Ascending aorta (tissue), 2 donors: ENCODE measurements at regions of chr1 and their contacts with region 1.

Region 1: DNA sequence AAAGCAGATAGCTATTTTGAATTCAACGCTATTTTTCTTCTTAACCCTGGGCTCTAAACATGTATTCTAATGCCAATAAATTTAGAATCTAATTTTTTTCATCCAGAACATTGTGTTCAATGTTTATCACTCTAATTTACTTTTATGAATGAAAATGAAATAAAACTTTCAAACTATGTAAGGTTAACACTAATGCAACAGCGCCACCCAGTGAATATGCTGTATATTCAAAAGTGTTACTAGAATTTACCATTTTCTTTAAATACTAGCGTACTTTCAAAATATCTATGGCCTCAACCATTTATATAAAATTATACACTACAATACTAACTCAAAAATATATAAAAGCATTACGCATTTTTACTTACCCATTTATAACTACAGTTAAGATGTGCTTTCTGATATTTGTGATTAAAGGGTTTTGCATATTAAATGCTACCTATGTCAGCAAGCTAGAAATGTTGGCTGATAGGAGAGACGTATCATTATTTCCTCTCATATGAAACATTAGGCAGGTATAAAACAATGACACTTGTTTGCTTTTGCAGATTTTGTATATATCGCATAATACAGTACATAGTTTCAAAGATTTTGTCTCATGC is 5.9 kb upstream of the NUF2 start:
- DNase-seq: no peak
- H3K4me3 ChIP-seq: peak overlapping the region in 1 of 2 donors; percentile 41
- H3K27ac ChIP-seq: no peak overlapping the region
- H3K4me1 ChIP-seq: peaks cover 3 to 8% of the 10 kb centered on the region in 2 donors
- H3K27me3 ChIP-seq: no peaks in the 10 kb centered on the region
- CTCF ChIP-seq: peak; percentile 60 to 74 (median 60)

Region 2: DNA sequence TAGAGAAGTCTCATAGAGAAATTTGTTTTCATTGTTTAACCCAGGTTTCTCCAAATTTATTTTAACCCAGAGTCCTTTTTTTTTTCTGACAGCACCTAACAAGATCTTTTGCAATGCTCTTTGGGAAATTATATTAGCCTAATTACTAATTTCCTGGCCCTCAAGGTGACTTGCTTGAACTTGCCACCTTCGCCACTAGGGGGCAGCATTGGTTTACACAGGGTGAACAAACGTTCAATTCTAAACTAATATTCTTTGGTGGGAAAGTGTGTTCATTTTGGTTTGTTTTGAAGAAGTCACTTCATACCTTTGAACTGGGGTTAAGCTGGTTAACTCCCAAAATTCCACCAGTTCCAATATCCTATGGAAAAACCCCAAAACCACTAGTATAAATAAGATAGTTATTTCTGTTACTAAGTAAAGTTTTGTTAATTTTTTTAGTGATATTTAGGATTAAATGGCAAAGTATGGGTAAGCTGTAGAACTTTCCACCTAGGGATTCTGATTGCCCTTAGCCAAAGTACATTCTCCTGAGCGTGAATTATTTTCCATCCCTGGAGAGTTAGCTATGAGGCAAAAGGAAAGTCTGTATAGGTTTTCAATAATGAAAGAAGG is 467.9 kb before region 1 on chr1:
- intact Hi-C with region 1: loop called (anchors 2 kb)
- DNase-seq: peak in 1 of 2 donors; percentile 88
- H3K4me3 ChIP-seq: peak overlapping the region in 1 of 2 donors; percentile 31
- H3K27ac ChIP-seq: no peak overlapping the region
- H3K4me1 ChIP-seq: no peaks in the 10 kb centered on the region
- H3K27me3 ChIP-seq: no peaks in the 10 kb centered on the region
- CTCF ChIP-seq: peak; percentile 78 to 95 (median 92)

Region 3: GRCh38 chr1:162987866-162988265 is 328.0 kb before region 1 on chr1:
- intact Hi-C with region 1: loop called (anchors 10 kb)
- DNase-seq: no peak
- H3K4me3 ChIP-seq: no peak overlapping the region
- H3K27ac ChIP-seq: no peak overlapping the region
- H3K4me1 ChIP-seq: no peaks in the 10 kb centered on the region
- H3K27me3 ChIP-seq: no peaks in the 10 kb centered on the region
- CTCF ChIP-seq: no peak

Region 4: DNA sequence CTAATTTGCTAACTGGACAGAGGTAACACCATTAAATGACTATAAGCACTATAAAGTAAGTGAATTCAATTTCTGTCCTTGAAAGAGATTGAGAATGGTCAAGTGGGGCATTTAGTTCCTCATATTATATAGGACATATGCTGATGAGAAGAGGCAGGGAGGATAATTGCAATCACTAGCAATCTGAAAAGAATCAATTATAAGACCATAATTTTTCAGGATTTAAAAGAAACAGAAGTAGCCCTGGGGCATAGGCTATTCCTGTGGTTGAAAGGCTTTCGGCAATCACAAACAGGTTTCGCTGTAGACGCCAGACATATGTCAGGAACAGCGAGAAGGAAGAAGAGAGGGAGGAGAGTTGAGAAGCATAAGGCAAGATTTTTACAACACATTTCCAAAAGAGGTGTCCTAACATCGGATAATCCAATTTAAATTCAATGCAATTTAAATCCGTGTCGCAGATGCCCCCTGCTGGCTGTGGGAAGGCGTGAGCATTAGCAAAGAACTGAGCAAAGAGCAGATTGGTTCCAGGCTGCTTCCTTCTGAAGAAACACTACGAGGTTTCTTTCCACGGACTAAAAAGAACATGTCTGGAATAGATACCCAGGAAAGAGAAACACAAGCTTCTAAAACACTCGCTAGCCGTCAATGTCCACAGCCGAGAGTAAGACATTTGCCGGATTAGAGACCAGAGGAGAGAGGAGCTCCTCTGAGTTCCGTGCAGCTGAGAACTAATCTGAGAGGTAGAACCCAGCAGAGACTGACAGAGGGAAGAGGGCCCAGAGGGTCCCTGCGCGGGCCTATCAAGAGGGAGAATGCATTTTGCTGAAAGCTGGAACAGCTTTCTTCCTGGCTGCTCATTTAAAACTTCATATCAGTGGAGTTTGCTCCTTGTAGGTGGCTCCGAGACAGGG is 141.1 kb before region 1 on chr1:
- intact Hi-C with region 1: loop called (anchors 2 kb)
- DNase-seq: peak in 1 of 2 donors; percentile 82
- H3K4me3 ChIP-seq: peak overlapping the region; percentile 44 to 56
- H3K27ac ChIP-seq: peak overlapping the region; percentile 82 to 85
- H3K4me1 ChIP-seq: peaks cover 0 to 52% of the 10 kb centered on the region in 2 donors
- H3K27me3 ChIP-seq: no peaks in the 10 kb centered on the region
- CTCF ChIP-seq: peak; percentile 84 to 86 (median 84)

Region 5: DNA sequence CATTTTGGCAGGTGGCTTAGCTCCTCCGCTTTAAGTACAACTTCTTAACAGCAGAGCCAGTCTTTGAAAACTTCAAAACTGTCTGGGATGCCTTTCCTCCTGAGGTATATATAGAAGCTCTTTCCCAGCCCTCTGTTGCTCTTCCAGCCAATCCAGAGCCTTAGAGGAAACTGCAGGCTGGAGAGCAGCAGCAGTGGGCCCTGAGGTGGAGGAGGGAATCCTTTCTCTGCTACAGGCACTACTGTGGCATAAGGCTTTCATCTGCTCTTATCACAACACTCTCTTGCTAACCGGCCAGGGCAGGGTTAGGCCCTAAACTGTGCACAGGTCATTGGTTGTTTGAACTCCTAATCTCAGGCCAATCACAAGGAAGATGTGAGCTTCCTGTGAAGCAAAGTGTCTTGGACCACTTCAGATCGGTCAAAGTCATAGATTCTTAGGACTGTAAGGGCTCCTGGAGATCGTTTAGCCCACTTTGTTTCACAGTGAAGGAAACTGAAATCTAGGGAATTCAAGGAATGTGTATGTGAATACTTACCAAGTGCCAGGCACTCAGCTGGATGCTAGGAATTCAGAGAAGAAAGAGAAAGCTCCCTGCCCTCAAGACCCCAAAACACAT is 112.9 kb before region 1 on chr1 and contains the start of gene RGS5:
- intact Hi-C with region 1: loop called (anchors 5 kb)
- DNase-seq: peak in 1 of 2 donors; percentile 79
- H3K4me3 ChIP-seq: peak within 1 kb of the TSS; percentile 51 to 77
- H3K27ac ChIP-seq: peak within 1 kb of the TSS; percentile 75 to 83
- H3K4me1 ChIP-seq: peaks cover 0 to 6% of the 10 kb centered on the region in 2 donors
- H3K27me3 ChIP-seq: no peaks in the 10 kb centered on the region
- CTCF ChIP-seq: no peak
- total RNA-seq, gene RGS5: 732 TPM